Activated T-helper 2 cell treated with anti-CD3 and anti-CD28 coated beads, Interferon-gamma antibody, Interleukin-2, Interleukin-4, amounts not matched to agents 10 μg/mL and 5 μg/mL and 100 μg/mL, durations not matched to agents 14 hours and 24 hours and 36 hours (primary cell): ENCODE measurements at regions of chr3 and their contacts with region 1.

Region 1: GRCh38 chr3:143171141-143171970 is 51.8 kb downstream of the CHST2 start:
- DNase-seq: no peak
- H3K4me3 Mint-ChIP-seq: peak overlapping the region; percentile 63
- H3K27ac Mint-ChIP-seq: peak overlapping the region; percentile 99
- H3K4me1 Mint-ChIP-seq: peaks cover 65% of the 10 kb centered on the region
- H3K27me3 Mint-ChIP-seq: no peaks in the 10 kb centered on the region

Region 2: DNA sequence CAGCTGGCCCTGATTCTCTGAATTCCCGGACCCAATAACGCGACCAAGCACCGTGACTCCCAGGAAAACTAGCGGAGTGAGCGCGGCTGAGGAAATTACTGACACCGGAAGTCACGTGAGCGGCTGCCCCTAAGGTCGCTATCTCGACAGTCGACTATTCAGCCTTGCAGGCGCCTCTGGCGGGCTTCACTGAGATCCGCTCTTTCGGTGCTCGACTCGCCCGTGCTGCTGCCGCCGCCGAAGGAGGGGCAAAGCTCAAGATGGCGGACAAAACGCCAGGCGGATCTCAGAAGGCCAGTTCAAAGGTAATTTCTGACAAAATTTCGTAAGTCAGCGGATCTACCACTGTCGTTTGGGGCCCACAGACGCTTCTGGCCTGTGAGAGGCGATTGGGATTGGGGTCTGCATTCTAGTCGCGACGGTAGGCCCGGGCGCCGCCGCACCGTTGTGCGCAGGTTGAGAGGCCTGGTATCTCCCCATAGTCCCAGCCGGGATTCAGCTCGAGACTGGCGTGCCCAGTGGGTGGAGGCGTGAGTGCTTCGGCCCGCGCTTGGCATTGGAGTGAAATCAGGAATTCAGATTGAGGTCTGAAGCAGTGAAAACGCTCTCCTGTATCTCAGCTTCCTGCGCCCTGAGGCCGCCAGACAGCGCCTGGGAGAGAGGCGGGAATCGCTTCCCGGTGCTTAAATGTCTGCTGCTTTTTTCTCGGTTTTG is 169.8 kb before region 1 on chr3 and contains the start of gene U2SURP:
- intact Hi-C with region 1: loop called (anchors 5 kb)
- DNase-seq: peak; percentile 91
- H3K4me3 Mint-ChIP-seq: peak within 1 kb of the TSS; percentile 94
- H3K27ac Mint-ChIP-seq: peak within 1 kb of the TSS; percentile 96
- H3K4me1 Mint-ChIP-seq: peaks cover 22% of the 10 kb centered on the region
- H3K27me3 Mint-ChIP-seq: peaks cover 3% of the 10 kb centered on the region
- total RNA-seq, gene U2SURP: 176 TPM in 2 replicates

Region 3: DNA sequence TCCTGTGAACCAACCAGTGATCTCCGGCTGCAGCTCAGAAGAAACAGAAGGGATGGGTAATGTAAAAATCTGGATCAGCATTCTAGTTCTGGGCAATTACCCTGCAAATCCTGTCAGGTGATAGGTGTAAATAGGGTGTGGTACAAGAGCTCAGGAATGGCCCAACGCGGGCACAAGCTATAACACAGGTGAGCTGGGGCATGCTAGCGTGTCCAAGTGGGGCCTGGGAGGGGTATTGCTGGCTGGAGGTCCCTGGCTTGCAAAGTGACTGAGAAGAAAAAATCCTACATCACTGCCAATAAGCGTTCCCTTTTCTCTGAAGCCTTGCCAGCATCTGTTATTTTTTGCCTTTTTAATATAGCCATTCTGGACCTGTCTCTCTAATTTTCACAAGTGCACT is 61.5 kb before region 1 on chr3:
- intact Hi-C with region 1: no loop called
- DNase-seq: no peak
- H3K4me3 Mint-ChIP-seq: no peak overlapping the region
- H3K27ac Mint-ChIP-seq: no peak overlapping the region
- H3K4me1 Mint-ChIP-seq: no peaks in the 10 kb centered on the region
- H3K27me3 Mint-ChIP-seq: peaks cover 12% of the 10 kb centered on the region

Region 4: DNA sequence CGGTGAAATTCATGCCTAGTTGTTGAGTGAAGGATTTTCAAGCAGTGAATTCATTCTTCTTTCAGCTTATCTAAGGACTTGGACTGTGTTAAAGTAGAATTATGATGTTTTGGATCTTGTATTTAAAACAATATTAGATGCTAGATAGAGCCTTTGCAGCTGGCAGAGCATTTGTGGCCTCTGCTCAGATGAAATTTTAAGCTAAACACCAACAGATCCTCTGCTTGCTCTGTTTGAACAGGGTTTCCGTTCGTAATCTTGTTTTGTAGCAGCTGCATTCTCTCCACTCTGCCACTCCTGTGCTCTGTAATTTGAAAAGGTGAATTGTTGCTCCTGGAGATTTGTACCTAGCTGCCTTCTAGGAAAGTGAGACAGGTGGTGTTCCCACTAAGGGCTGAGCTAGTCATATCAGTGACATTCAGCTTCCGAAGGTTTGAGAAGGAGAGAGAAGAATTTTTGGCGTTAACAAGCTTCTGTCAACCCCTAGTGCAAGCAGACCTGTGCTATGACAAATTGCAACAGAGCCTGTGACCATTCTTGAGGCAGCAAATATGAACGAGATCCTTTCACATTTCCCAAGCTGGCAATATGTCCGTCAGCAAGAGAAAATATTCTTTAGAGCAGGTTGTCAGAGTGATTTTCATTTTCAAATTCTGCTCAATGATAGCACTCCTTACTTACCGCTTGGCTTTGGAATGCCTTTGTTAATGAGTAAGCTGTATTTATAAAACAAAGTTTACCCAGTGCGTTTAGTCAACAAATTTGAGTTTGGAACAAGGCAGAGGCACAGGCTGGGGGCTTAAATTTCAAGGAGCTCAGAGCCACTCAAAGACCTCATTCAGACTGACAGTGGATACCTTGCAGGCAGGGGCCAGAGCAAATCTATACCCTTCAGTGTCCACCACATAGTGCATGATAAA is 46.5 kb before region 1 on chr3:
- intact Hi-C with region 1: no loop called
- DNase-seq: no peak
- H3K4me3 Mint-ChIP-seq: no peak overlapping the region
- H3K27ac Mint-ChIP-seq: no peak overlapping the region
- H3K4me1 Mint-ChIP-seq: peaks cover 39% of the 10 kb centered on the region
- H3K27me3 Mint-ChIP-seq: no peaks in the 10 kb centered on the region

Region 5: GRCh38 chr3:143207338-143207961 is 36.1 kb after region 1 on chr3:
- intact Hi-C with region 1: loop called (anchors 2 kb)
- DNase-seq: no peak
- H3K4me3 Mint-ChIP-seq: no peak overlapping the region
- H3K27ac Mint-ChIP-seq: peak overlapping the region; percentile 61
- H3K4me1 Mint-ChIP-seq: peaks cover 33% of the 10 kb centered on the region
- H3K27me3 Mint-ChIP-seq: no peaks in the 10 kb centered on the region

Region 6: DNA sequence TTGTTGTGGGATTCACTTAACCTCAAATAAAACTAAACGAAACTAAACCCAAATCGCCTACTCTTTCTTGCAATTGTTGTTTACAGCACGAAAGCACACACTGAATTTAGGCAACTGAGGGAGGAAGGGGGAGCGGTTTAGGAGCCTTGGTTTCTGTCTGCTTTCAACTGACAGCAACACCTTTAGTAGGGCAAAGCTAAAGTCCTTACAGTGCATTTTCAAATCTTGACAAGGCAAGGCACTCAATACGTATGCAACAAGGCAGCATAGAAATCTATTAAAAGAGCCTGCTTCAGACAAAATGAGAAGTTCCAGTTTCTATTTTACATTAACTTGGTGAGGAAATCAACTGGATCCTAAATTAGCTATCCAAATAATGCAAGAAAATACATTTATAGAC is 122.8 kb after region 1 on chr3:
- intact Hi-C with region 1: loop called (anchors 5 kb)
- DNase-seq: no peak
- H3K4me3 Mint-ChIP-seq: no peak overlapping the region
- H3K27ac Mint-ChIP-seq: no peak overlapping the region
- H3K4me1 Mint-ChIP-seq: peaks cover 44% of the 10 kb centered on the region
- H3K27me3 Mint-ChIP-seq: no peaks in the 10 kb centered on the region

Region 7: DNA sequence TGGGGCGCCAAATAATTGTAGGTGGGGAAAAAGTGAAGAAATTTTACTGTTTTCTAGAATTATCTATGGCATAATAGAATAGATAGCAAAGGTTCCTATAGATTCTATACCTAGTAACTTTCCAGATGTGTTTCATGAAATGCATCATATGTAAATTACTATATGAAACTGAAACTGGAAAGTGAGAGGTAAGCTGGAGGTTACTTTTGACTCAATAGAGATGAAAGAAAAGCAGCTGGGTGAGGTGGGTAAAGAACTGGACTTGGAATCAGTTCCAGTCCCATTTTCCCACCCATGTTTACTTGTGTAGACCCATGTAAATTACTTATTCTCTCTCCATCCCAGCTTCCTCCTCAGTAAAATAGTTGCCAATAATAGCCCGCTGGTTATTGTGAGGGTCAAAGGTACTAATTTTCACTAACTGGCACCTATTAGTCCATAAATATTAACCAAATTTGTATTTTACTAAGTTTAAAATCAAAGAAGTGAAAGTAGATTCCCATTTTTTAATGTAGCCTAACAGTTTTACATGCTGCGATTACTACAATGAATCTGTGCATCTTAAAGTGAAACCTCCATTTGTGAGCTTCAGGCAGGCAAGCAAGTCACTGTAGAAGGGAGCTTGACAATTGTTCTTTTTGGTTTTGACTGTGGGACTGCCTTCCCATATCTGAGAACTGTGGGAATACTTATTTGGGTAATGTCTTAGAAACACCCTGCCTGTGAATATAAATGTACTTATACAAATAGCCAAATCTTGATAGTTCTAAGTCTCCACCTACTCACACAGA is 364.8 kb after region 1 on chr3:
- intact Hi-C with region 1: loop called (anchors 5 kb)
- DNase-seq: no peak
- H3K4me3 Mint-ChIP-seq: no peak overlapping the region
- H3K27ac Mint-ChIP-seq: no peak overlapping the region
- H3K4me1 Mint-ChIP-seq: peaks cover 12% of the 10 kb centered on the region
- H3K27me3 Mint-ChIP-seq: peaks cover 14% of the 10 kb centered on the region